ENCODE measurements at regions of chr16 and their contacts with region 1.

Region 1: DNA sequence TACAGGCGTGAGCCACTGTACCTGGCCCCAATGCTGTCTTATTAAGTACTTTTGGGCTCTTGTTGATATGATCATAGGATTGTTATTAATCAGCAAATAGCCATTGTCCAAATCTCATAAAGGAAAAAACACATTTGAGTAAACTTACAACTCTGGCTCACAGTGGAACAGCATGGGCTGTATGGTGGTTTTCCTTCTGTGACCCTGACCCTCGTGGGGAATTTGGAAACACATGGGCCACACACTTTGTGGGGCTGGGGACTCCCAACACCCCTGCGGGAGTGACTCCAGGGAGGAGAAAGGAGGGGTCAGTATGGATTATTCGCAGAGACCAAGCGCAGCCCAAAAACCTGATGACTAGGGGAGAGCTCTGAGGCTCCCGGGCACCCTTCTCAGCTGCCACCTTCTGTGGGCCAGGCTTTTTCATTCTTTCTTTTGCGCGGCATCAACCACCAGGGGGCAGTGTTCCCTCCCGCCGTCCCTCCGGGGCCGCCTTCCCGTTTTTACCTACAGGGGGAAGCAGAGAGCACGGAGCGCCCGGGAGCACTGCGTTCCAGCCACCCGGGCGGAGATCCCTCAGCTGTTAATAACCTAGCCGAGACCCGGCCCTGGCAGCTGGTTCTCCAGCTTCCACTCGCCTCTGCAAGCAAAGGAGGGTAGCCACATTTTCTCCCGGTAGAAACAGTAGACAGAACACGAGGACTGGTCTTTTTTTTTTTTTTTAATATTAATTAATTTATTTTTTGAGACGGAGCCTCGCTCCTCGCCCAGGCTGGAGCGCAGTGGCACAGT is 9.7 kb downstream of the TSNAXIP1 start:
- DNase-seq: peak; percentile 85 to 95
- H3K4me3 ChIP-seq: no peak overlapping the region
- H3K4me3 Mint-ChIP-seq: no peak overlapping the region
- H3K27ac Mint-ChIP-seq: no peak overlapping the region
- H3K4me1 ChIP-seq: no peaks in the 10 kb centered on the region
- H3K4me1 Mint-ChIP-seq: no peaks in the 10 kb centered on the region
- H3K27me3 ChIP-seq: no peaks in the 10 kb centered on the region
- H3K27me3 Mint-ChIP-seq: no peaks in the 10 kb centered on the region
- CTCF ChIP-seq: peak; percentile 100

Region 2: DNA sequence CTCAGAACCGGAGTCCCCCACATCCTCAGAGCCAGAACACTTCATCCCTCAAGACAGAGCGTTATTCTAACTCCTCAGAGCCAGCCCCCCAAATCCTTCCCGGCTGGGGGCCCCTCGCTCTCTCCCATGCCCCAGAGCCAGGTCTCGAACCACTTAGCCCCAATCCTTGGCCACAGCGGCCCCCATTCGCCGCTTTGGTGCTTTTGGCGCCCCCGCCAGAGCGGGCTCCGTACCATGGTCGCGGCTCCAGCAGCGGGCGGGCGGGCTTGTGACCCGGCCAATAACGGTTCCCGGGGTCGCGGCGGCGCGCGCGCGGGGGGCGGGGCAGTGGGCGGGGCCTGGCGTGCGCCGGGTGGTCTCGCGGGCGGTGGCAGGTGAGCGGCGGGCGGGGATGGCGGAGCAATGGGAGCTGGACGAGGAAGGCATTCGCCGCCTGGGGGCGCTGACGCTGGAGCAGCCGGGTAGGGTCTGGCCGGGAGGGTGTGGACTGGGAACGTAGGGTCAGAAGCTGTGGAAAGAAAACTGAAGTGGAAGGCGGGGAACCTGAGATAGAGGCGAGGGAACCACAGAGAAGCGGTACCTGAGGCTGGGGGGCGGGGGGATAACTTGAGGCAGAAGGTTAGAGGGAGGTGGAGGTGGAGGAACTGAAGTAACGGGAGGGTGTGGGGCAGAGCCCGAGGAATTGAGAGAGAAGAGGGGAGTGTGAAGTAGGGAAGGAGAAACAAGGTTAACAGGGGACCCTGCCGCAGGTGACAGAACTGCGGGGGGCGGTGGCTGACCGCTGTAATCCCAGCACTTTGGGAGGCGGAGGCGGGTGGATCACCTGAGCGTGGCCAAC is 489.7 kb before region 1 on chr16 and contains the starts of genes KCTD19 and LRRC36:
- CTCF ChIA-PET with region 1: no interaction called
- POLR2A ChIA-PET with region 1: no interaction called
- intact Hi-C with region 1: no loop called
- DNase-seq: peak; percentile 62 to 72
- H3K4me3 ChIP-seq: peak within 1 kb of the TSS; percentile 35
- H3K4me3 Mint-ChIP-seq: peak within 1 kb of the TSS; percentile 60
- H3K27ac Mint-ChIP-seq: no peak within 1 kb of the TSS
- H3K4me1 ChIP-seq: peaks cover 22% of the 10 kb centered on the region
- H3K4me1 Mint-ChIP-seq: peaks cover 13% of the 10 kb centered on the region
- H3K27me3 ChIP-seq: no peaks in the 10 kb centered on the region
- H3K27me3 Mint-ChIP-seq: peaks cover 5% of the 10 kb centered on the region
- CTCF ChIP-seq: peak in 1 of 2 experiments; percentile 27
- total RNA-seq, gene KCTD19: not detected in 2 replicates
- total RNA-seq, gene LRRC36: 0.79 TPM in 1 of 2 replicates, not detected in the other

Region 3: DNA sequence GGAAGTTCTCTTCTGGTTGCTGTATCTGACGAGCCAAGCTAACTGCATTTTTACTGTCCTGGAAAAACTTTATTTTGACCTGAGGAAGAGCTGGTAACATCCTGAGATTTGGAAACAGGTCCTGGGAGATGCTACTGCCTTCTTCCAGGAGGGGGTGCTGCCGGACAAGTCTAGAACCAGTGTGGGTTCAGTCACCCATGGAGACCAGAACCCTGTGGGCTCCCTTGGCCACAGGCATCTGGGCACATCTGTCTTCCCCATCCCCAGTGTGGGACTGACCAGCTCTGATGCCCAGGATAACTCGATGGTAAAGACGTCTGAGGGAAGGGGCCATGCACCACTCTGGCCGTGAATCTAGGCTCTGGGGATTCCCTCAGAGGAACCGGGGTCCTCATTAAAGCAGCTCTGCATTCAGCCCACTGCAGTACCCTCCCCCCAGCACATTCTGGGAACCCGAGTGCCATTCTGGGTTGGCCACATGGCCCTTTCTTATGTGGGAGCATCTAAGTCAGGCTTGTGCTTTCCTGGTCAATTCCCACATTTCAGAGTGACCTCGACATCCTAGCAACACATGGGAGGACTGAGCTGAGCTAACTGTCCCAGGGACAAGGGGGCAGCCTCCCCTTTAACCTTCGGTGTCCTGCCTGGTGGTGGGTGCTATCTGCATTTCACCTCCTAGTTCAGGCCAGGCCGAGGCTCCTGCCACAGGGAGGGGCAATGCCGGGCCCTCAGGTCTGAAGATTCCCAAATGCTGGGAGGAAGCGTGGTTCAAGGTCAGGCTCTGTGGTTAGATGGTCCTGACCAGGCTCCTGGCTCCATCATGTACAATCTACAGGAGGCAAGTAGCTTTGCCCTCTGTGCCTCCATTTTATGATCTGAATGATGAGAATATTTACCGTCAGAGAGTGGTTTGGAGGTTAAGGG is 143.4 kb before region 1 on chr16:
- CTCF ChIA-PET with region 1: interaction called, 8 read pairs
- POLR2A ChIA-PET with region 1: no interaction called
- intact Hi-C with region 1: loop called (anchors 1 kb)
- DNase-seq: peak; percentile 80 to 87
- H3K4me3 ChIP-seq: no peak overlapping the region
- H3K4me3 Mint-ChIP-seq: no peak overlapping the region
- H3K27ac Mint-ChIP-seq: no peak overlapping the region
- H3K4me1 ChIP-seq: peaks cover 8% of the 10 kb centered on the region
- H3K4me1 Mint-ChIP-seq: peaks cover 4% of the 10 kb centered on the region
- H3K27me3 ChIP-seq: no peaks in the 10 kb centered on the region
- H3K27me3 Mint-ChIP-seq: no peaks in the 10 kb centered on the region
- CTCF ChIP-seq: peak; percentile 91 to 94

Region 4: DNA sequence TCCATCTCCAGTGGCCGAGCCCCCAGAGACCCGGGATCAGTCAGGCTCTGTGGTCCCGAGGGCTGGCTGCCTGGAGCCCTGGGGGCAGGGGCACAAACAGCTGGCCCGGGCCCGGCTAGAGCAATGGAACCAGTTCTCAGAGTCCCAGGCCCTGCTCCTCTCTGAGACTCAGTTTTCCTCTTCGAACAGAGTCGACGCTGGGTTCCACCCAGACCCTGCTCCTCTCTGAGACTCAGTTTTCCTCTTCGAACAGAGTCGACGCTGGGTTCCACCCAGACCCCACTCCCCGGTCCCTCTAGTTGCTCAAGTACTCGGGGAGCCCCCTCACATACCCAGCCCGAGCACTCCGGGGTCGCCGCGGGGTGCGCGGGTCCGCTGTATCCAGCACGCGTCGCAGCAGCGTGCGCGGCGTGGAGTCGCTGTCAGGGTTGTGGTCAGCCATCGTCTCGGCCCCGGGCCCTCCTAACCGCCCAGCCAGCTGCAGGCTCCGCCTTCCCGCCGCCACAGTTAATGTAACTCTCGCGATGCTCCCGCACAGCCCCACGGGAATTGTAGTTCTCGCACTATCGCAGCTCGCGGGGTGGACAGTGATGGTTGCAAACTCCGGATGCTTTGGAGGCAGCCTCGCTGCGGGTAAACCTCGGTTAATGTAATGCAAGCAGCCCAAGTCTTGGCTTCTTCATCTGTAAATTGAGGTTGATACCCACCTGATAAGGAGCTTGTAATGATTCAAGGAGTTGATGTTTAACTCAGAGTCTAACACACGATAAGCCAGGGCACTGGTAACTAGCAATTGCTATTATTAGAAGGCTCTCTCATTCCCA is 17.2 kb after region 1 on chr16:
- CTCF ChIA-PET with region 1: interaction called, 14 read pairs
- POLR2A ChIA-PET with region 1: interaction called, 4 read pairs
- intact Hi-C with region 1: no loop called
- DNase-seq: peak; percentile 94 to 96
- H3K4me3 ChIP-seq: peak overlapping the region; percentile 83
- H3K4me3 Mint-ChIP-seq: peak overlapping the region; percentile 99
- H3K27ac Mint-ChIP-seq: peak overlapping the region; percentile 92
- H3K4me1 ChIP-seq: no peaks in the 10 kb centered on the region; the same call in 1 of the 2 replicates
- H3K4me1 Mint-ChIP-seq: peaks cover 6% of the 10 kb centered on the region
- H3K27me3 ChIP-seq: no peaks in the 10 kb centered on the region
- H3K27me3 Mint-ChIP-seq: no peaks in the 10 kb centered on the region
- CTCF ChIP-seq: no peak

Region 5: DNA sequence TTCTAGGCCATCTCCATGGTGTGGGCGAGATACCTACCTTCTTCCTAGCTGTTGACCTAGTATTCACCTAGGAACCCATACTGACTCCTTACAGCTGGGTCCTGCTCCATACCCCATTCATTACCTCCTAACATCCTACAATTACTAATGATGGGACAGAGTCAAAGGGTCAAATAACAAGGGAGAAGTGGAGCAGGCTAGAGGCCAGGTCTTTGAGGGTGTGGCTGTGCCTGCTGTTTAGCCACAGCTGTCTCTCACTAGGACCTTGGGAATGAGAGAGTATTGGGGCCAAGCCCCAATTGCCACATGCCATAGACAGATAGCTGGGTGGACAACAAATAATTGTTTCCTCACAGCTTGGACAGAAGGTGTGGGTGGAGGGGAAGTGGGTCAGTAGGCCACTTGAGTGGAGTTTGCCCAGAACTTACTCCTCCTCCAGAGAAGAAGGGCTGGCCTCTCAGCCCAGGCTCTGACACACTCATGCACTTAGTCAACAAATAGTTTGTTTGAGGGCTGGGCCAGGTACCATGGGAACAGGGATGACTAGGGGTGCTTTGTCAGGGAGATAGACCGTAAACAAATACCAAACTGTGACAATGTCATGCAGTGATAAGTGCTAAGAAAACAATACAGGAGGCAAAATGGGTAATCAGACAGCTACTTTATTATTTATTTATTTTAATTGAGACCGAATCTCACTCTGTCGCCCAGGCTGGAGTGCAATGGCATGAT is 41.2 kb after region 1 on chr16:
- CTCF ChIA-PET with region 1: interaction called, 10 read pairs
- POLR2A ChIA-PET with region 1: no interaction called
- intact Hi-C with region 1: no loop called
- DNase-seq: peak; percentile 86 to 91
- H3K4me3 ChIP-seq: no peak overlapping the region
- H3K4me3 Mint-ChIP-seq: peak overlapping the region; percentile 22
- H3K27ac Mint-ChIP-seq: peak overlapping the region; percentile 90
- H3K4me1 ChIP-seq: peaks cover 21% of the 10 kb centered on the region
- H3K4me1 Mint-ChIP-seq: peaks cover 31% of the 10 kb centered on the region
- H3K27me3 ChIP-seq: no peaks in the 10 kb centered on the region
- H3K27me3 Mint-ChIP-seq: no peaks in the 10 kb centered on the region
- CTCF ChIP-seq: no peak

Region 6: DNA sequence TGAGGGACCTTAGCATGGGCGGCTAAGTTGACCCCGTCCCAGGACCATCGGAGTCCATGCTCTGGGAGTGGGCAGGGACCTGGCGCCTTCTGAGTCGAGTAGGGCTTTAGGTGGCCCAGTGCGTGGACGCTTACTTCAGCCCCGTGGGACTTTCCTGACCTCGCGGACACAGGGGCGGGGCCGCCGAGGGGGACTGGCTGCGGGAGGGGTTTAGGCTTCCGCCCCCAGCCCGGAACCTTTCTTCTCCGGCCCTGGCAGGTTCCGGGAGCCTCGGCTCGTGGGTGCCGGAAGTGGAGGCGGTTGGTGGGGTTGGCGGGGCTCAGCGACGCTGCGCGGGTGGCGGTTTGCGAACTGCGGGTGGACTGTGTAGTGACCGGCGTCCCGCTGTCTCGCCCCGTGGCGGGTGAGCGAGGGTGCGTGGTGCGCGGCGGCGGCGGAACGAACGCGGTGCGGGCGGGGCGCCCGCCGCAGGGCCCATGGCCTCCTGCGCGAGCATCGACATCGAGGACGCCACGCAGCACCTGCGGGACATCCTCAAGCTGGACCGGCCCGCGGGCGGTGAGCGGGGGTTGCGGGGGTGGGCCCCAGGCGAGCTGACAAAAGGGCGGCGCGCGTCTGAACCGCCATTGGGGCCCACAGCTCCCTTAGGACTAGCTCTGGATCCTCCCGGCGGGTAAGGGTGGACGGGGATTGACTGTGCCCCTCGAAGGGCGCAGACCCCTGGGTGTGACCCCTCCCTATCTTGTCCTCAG is 56.5 kb after region 1 on chr16 and contains the start of gene EDC4:
- CTCF ChIA-PET with region 1: interaction called, 7 read pairs
- POLR2A ChIA-PET with region 1: interaction called, 4 read pairs
- intact Hi-C with region 1: loop called (anchors 2 kb)
- DNase-seq: peak; percentile 87 to 91
- H3K4me3 ChIP-seq: peak within 1 kb of the TSS; percentile 93
- H3K4me3 Mint-ChIP-seq: peak within 1 kb of the TSS; percentile 90
- H3K27ac Mint-ChIP-seq: peak within 1 kb of the TSS; percentile 87
- H3K4me1 ChIP-seq: peaks cover 7% of the 10 kb centered on the region; the same call in 1 of the 2 replicates
- H3K4me1 Mint-ChIP-seq: peaks cover 20% of the 10 kb centered on the region
- H3K27me3 ChIP-seq: no peaks in the 10 kb centered on the region
- H3K27me3 Mint-ChIP-seq: no peaks in the 10 kb centered on the region
- CTCF ChIP-seq: no peak
- total RNA-seq, gene EDC4: 124 and 139 TPM in 2 replicates

Region 7: GRCh38 chr16:67928561-67929364 is 112.3 kb after region 1 on chr16:
- CTCF ChIA-PET with region 1: interaction called, 7 read pairs
- POLR2A ChIA-PET with region 1: no interaction called
- intact Hi-C with region 1: loop called (anchors 1 kb)
- DNase-seq: peak; percentile 85 to 88
- H3K4me3 ChIP-seq: no peak overlapping the region
- H3K4me3 Mint-ChIP-seq: no peak overlapping the region
- H3K27ac Mint-ChIP-seq: no peak overlapping the region
- H3K4me1 ChIP-seq: peaks cover under 1% of the 10 kb centered on the region; the same call in 1 of the 2 replicates
- H3K4me1 Mint-ChIP-seq: peaks cover 1% of the 10 kb centered on the region
- H3K27me3 ChIP-seq: no peaks in the 10 kb centered on the region
- H3K27me3 Mint-ChIP-seq: no peaks in the 10 kb centered on the region
- CTCF ChIP-seq: peak; percentile 82 to 98